Activated CD4-positive, alpha-beta T cell treated with anti-CD3 and anti-CD28 coated beads, Interleukin-2, amount 10 ng/mL, durations not matched to agents 24 days and 14 days (primary cell): ENCODE measurements at regions of chr9 and their contacts with region 1.

Region 1: DNA sequence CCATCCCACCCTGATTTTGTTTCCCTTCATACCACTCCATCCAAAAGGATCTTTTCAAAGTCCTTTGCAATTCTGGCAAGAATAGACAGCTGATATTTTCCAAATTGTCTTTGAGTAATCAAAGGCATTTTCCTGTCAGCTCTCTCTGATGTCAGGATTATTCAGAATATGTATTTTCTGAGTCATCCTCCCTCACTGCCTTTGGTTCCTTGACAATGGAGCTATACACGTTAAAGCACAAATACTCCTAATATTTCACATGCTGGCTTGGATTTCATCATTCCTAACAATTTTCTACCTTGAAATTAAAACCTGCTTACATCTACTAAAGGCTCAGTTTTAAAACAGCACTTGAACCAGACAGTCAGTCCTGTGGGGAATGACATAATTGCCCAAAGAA is 379.4 kb downstream of the GADD45G start:
- DNase-seq: no peak
- H3K4me3 Mint-ChIP-seq: peak overlapping the region; percentile 75
- H3K27ac Mint-ChIP-seq: peak overlapping the region; percentile 90
- H3K4me1 Mint-ChIP-seq: peaks cover 50% of the 10 kb centered on the region
- H3K27me3 Mint-ChIP-seq: peaks cover 11% of the 10 kb centered on the region

Region 2: GRCh38 chr9:89418882-89419640 is 565.2 kb before region 1 on chr9:
- intact Hi-C with region 1: loop called (anchors 5 kb)
- DNase-seq: peak; percentile 92
- H3K4me3 Mint-ChIP-seq: peak overlapping the region; percentile 93
- H3K27ac Mint-ChIP-seq: peak overlapping the region; percentile 86
- H3K4me1 Mint-ChIP-seq: peaks cover 82% of the 10 kb centered on the region
- H3K27me3 Mint-ChIP-seq: no peaks in the 10 kb centered on the region

Region 3: GRCh38 chr9:89701221-89701798 is 282.9 kb before region 1 on chr9:
- intact Hi-C with region 1: loop called (anchors 1 kb)
- DNase-seq: peak; percentile 93
- H3K4me3 Mint-ChIP-seq: peak overlapping the region; percentile 99
- H3K27ac Mint-ChIP-seq: peak overlapping the region; percentile 98
- H3K4me1 Mint-ChIP-seq: peaks cover 73% of the 10 kb centered on the region
- H3K27me3 Mint-ChIP-seq: no peaks in the 10 kb centered on the region

Region 4: DNA sequence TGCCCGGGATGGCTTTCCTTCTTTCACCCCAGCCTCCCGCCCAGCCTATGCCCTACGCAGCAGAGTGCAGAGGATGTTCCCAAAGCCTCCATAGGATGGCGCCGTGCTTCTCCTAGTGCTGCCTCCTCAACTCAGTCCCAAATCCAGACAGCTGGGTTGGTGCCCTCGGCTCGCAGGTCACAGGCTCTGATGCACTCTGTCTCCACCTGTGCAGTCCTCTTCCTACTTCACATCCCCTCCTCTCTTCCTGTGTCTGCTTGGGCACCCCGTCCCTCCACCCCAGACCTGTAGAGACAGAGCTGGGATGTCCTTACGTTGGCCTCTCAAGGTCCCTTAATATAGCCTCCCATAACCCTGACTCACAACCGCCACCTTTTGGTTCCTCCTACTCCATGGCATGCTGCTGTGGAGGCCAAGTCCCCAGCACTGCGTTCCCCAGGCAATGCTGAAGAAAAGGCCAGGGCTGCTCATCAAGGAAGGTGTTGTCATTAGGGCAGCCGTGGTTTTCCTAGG is 65.0 kb before region 1 on chr9:
- intact Hi-C with region 1: loop called (anchors 1 kb)
- DNase-seq: peak; percentile 87
- H3K4me3 Mint-ChIP-seq: no peak overlapping the region
- H3K27ac Mint-ChIP-seq: peak overlapping the region; percentile 56
- H3K4me1 Mint-ChIP-seq: peaks cover 38% of the 10 kb centered on the region
- H3K27me3 Mint-ChIP-seq: peaks cover 3% of the 10 kb centered on the region

Region 5: GRCh38 chr9:89999534-90000370 is 15.5 kb after region 1 on chr9:
- intact Hi-C with region 1: loop called (anchors 1 kb)
- DNase-seq: peak; percentile 92
- H3K4me3 Mint-ChIP-seq: peak overlapping the region; percentile 76
- H3K27ac Mint-ChIP-seq: peak overlapping the region; percentile 86
- H3K4me1 Mint-ChIP-seq: peaks cover 32% of the 10 kb centered on the region
- H3K27me3 Mint-ChIP-seq: no peaks in the 10 kb centered on the region

Region 6: DNA sequence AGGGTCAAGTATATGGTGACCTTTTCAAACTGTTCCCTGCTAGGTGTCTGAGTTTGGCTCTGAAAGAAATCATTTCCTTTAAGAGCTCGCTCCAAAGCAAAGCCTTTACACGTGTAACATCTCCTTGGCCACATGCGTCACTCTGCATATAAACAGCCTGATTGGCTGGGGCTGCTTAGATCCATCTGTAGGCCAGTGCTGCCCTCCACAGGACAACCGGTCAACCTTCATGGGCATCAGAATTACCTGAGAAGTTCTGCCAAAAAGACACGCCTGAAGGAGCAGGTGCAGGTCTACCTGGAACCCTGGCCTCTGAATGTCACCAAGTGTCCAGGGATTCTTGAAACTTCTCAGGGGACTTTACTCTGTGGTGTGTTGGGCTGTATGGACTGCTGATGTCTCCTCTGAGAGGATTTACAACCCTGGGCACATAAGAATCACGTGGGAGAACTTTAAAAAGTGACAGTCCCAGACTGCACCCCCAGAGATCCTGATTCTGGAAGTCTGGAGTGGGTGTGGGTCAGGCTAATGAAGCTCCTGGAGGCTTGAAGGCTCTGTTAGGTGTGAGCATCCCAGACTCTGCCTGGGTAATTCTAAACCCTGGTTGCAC is 118.2 kb after region 1 on chr9:
- intact Hi-C with region 1: loop called (anchors 5 kb)
- DNase-seq: peak; percentile 94
- H3K4me3 Mint-ChIP-seq: no peak overlapping the region
- H3K27ac Mint-ChIP-seq: peak overlapping the region; percentile 39
- H3K4me1 Mint-ChIP-seq: peaks cover 14% of the 10 kb centered on the region
- H3K27me3 Mint-ChIP-seq: peaks cover 11% of the 10 kb centered on the region

Region 7: DNA sequence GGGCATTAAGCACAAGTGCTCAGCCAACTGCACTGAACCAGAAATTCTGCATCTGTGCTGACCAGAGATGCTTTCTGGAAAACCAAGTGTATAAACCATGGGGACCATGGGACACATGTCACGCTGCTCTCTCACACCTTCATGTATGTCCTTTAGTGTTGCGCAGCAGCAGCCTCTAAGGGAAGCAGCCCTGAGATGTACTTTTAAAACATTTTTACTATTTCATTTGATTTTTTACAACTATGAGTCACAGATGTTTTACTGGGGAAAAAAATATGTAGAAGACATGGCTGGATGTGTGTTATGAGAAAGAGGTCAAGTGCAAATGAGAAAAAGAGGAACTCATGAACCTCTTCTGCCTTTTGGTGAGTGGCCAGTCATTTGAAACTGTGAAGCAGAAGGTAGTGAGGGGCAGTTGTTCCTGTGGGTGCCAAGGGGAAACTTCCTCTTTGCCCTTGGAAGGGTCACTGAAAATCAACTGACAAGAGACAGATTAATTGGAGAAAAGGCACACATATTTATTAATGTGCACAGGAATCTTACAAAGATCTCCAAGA is 786.0 kb after region 1 on chr9:
- intact Hi-C with region 1: no loop called
- DNase-seq: no peak
- H3K4me3 Mint-ChIP-seq: no peak overlapping the region
- H3K27ac Mint-ChIP-seq: no peak overlapping the region
- H3K4me1 Mint-ChIP-seq: no peaks in the 10 kb centered on the region
- H3K27me3 Mint-ChIP-seq: peaks cover 7% of the 10 kb centered on the region